CD14-positive monocyte (primary cell): ENCODE measurements at regions of chr19 and their contacts with region 1.

Region 1: DNA sequence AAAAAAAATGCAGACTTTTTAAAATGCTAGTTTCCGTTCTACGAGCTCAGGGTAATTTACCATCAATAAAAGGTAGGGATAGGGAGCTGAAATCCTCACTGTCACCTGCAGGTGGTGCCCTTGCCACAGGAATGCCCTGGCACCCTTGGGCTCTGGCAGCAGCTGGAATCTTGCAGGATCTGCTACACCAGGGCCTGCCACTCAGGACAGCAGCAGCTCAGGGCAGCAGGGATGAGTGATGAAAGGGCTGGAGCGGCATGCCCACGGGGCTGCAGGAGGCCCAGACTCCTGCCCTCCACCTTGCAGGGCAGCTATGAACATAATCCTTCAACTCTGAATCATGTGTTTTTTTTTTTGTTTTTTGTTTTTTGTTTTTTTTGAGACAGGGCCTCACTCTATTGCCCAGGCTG is 54.0 kb downstream of the GNG7 start:
- DNase-seq: peak; percentile 59 to 74 (median 69)
- H3K4me3 ChIP-seq: no peak overlapping the region
- H3K4me3 Mint-ChIP-seq: no peak overlapping the region
- H3K27ac ChIP-seq: no peak overlapping the region
- H3K27ac Mint-ChIP-seq: no peak overlapping the region
- H3K4me1 ChIP-seq: no peaks in the 10 kb centered on the region
- H3K4me1 Mint-ChIP-seq: no peaks in the 10 kb centered on the region
- H3K27me3 ChIP-seq: no peaks in the 10 kb centered on the region
- H3K27me3 Mint-ChIP-seq: no peaks in the 10 kb centered on the region
- CTCF ChIP-seq: peak; percentile 95

Region 2: DNA sequence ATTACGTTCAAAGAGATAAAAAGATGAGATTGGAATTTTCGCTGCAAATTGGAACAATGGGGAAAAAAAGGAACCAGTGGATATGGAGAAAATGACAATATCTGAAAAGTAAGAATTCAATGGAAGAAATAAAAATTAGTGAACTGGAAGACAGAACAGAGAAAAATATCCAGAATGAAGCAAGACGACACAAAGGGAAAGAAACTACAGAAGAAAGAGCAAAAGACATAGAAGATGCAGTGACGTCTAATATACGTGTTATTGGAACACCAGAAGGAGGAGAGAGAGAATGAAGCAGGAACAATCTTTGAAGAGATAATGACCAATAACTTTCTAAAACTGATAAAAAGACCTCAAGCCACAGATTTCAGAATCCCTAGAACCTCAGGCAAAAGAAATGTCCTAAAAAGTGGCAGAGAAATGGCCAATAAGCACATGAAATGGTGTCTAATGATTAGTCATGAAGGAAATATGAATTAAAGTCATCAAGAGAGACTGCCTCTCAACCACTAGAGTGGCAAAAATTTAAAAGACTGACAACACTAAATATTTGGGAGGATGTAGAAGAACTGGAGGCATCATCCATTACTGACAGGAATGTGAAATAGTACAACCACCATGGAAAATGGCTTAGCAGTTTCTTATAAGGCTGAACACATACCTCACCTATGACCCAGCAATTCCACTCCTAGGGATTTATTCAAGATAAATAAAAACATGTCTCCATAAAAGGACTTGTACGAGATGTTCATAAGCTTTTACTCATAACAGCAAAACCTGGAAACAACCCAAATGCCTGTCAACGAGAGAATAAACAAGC is 116.1 kb before region 1 on chr19:
- intact Hi-C with region 1: no loop called
- DNase-seq: no peak
- H3K4me3 ChIP-seq: no peak overlapping the region
- H3K4me3 Mint-ChIP-seq: no peak overlapping the region
- H3K27ac ChIP-seq: no peak overlapping the region
- H3K27ac Mint-ChIP-seq: no peak overlapping the region
- H3K4me1 ChIP-seq: no peaks in the 10 kb centered on the region
- H3K4me1 Mint-ChIP-seq: peaks cover 6% of the 10 kb centered on the region
- H3K27me3 ChIP-seq: no peaks in the 10 kb centered on the region
- H3K27me3 Mint-ChIP-seq: peaks cover 0 to 1% (median 0%) of the 10 kb centered on the region in 3 donors
- CTCF ChIP-seq: no peak

Region 3: DNA sequence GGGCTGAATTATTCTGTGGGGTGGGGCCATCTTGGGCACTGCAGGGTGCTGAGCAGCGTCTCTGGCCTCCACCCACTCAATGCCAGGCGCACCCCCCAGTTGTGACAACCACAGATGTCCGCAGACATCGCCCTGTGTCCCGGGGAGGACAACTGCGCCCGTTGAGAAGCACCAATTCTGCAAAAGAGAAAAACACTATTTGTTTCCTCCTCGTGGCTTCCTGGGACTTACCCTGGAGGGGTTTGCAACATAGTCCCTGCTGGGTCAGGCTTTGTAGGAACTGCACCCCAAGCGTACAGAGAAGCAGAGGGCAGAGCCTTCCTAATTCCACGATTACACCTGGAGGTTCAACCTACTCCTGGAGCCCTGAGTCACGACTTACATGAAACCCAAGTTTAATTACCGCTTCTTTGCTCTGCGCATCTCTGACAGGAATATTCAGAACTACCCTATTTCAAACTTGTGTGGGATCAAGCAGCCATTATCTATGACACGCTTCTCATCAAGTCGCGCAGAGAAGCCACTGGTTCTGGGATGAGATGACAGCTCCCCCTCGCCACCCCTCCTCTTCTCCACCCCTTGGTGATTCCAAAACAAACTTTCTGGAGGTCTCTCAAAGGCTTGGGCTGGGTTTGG is 102.4 kb after region 1 on chr19:
- intact Hi-C with region 1: loop called (anchors 1 to 2 kb)
- DNase-seq: no peak
- H3K4me3 ChIP-seq: no peak overlapping the region
- H3K4me3 Mint-ChIP-seq: no peak overlapping the region
- H3K27ac ChIP-seq: no peak overlapping the region
- H3K27ac Mint-ChIP-seq: no peak overlapping the region
- H3K4me1 ChIP-seq: peaks cover 7 to 10% of the 10 kb centered on the region in 2 donors
- H3K4me1 Mint-ChIP-seq: peaks cover 7% of the 10 kb centered on the region
- H3K27me3 ChIP-seq: no peaks in the 10 kb centered on the region
- H3K27me3 Mint-ChIP-seq: peaks cover 2 to 8% (median 8%) of the 10 kb centered on the region in 3 donors
- CTCF ChIP-seq: no peak